ENCODE measurements at regions of chr17 and their contacts with region 1.

Region 1: GRCh38 chr17:78360371-78361224 is 721 bp upstream of the SOCS3 start:
- DNase-seq: peak; percentile 97
- ATAC-seq: peak; percentile 43
- H3K4me3 Mint-ChIP-seq: peak overlapping the region; percentile 63
- H3K27ac Mint-ChIP-seq: peak overlapping the region; percentile 84
- H3K4me1 Mint-ChIP-seq: peaks cover 39% of the 10 kb centered on the region
- H3K27me3 Mint-ChIP-seq: peaks cover 13% of the 10 kb centered on the region
- CTCF ChIP-seq: peak; percentile 97

Region 2: GRCh38 chr17:78378225-78379130 is 17.9 kb after region 1 on chr17 and contains the start of gene PGS1:
- CTCF ChIA-PET with region 1: interaction called, 27 read pairs
- POLR2A ChIA-PET with region 1: no interaction called
- intact Hi-C with region 1: no loop called
- DNase-seq: peak; percentile 86
- ATAC-seq: peak; percentile 40
- H3K4me3 Mint-ChIP-seq: peak within 1 kb of the TSS; percentile 98
- H3K27ac Mint-ChIP-seq: peak within 1 kb of the TSS; percentile 94
- H3K4me1 Mint-ChIP-seq: peaks cover 46% of the 10 kb centered on the region
- H3K27me3 Mint-ChIP-seq: no peaks in the 10 kb centered on the region
- CTCF ChIP-seq: no peak
- total RNA-seq, gene PGS1: 42.1 to 43.3 TPM

Region 3: GRCh38 chr17:78383725-78384471 is 23.3 kb after region 1 on chr17:
- CTCF ChIA-PET with region 1: interaction called, 27 read pairs
- POLR2A ChIA-PET with region 1: no interaction called
- intact Hi-C with region 1: no loop called
- DNase-seq: peak; percentile 78
- ATAC-seq: peak; percentile 38
- H3K4me3 Mint-ChIP-seq: peak overlapping the region; percentile 60
- H3K27ac Mint-ChIP-seq: peak overlapping the region; percentile 99
- H3K4me1 Mint-ChIP-seq: peaks cover 86% of the 10 kb centered on the region
- H3K27me3 Mint-ChIP-seq: no peaks in the 10 kb centered on the region
- CTCF ChIP-seq: no peak

Region 4: GRCh38 chr17:78412403-78412802 is 51.8 kb after region 1 on chr17:
- CTCF ChIA-PET with region 1: interaction called, 15 read pairs
- POLR2A ChIA-PET with region 1: interaction called, 19 read pairs
- intact Hi-C with region 1: no loop called
- DNase-seq: peak; percentile 68
- ATAC-seq: peak; percentile 32
- H3K4me3 Mint-ChIP-seq: no peak overlapping the region
- H3K27ac Mint-ChIP-seq: peak overlapping the region; percentile 90
- H3K4me1 Mint-ChIP-seq: peaks cover 66% of the 10 kb centered on the region
- H3K27me3 Mint-ChIP-seq: no peaks in the 10 kb centered on the region
- CTCF ChIP-seq: peak; percentile 56

Region 5: GRCh38 chr17:78458736-78459331 is 98.2 kb after region 1 on chr17:
- CTCF ChIA-PET with region 1: no interaction called
- POLR2A ChIA-PET with region 1: no interaction called
- intact Hi-C with region 1: no loop called
- DNase-seq: no peak
- ATAC-seq: no peak
- H3K4me3 Mint-ChIP-seq: no peak overlapping the region
- H3K27ac Mint-ChIP-seq: no peak overlapping the region
- H3K4me1 Mint-ChIP-seq: no peaks in the 10 kb centered on the region
- H3K27me3 Mint-ChIP-seq: no peaks in the 10 kb centered on the region
- CTCF ChIP-seq: no peak

Region 6: GRCh38 chr17:78617511-78618061 is 257.0 kb after region 1 on chr17:
- CTCF ChIA-PET with region 1: no interaction called
- POLR2A ChIA-PET with region 1: no interaction called
- intact Hi-C with region 1: no loop called
- DNase-seq: no peak
- ATAC-seq: no peak
- H3K4me3 Mint-ChIP-seq: no peak overlapping the region
- H3K27ac Mint-ChIP-seq: no peak overlapping the region
- H3K4me1 Mint-ChIP-seq: no peaks in the 10 kb centered on the region
- H3K27me3 Mint-ChIP-seq: no peaks in the 10 kb centered on the region
- CTCF ChIP-seq: no peak